Activated CD8-positive, alpha-beta T cell treated with anti-CD3 and anti-CD28 coated beads for 36 hours (primary cell): ENCODE measurements at regions of chr1 and their contacts with region 1.

Region 1: GRCh38 chr1:27632387-27633297 is 2.3 kb downstream of the FGR start:
- DNase-seq: peak; percentile 91
- ATAC-seq: peak; percentile 73
- H3K4me3 Mint-ChIP-seq: peak overlapping the region; percentile 57
- H3K27ac Mint-ChIP-seq: peak overlapping the region; percentile 84
- H3K4me1 Mint-ChIP-seq: peaks cover 71% of the 10 kb centered on the region
- H3K27me3 Mint-ChIP-seq: no peaks in the 10 kb centered on the region
- CTCF ChIP-seq: no peak

Region 2: GRCh38 chr1:27618341-27619082 is 14.1 kb before region 1 on chr1:
- CTCF ChIA-PET with region 1: interaction called, 4 read pairs
- POLR2A ChIA-PET with region 1: interaction called, 10 read pairs
- intact Hi-C with region 1: no loop called
- DNase-seq: peak; percentile 75
- ATAC-seq: peak; percentile 86
- H3K4me3 Mint-ChIP-seq: no peak overlapping the region
- H3K27ac Mint-ChIP-seq: peak overlapping the region; percentile 85
- H3K4me1 Mint-ChIP-seq: peaks cover 44% of the 10 kb centered on the region
- H3K27me3 Mint-ChIP-seq: no peaks in the 10 kb centered on the region
- CTCF ChIP-seq: no peak

Region 3: GRCh38 chr1:27760426-27760825 is 127.8 kb after region 1 on chr1:
- CTCF ChIA-PET with region 1: no interaction called
- POLR2A ChIA-PET with region 1: no interaction called
- intact Hi-C with region 1: no loop called
- DNase-seq: no peak
- ATAC-seq: no peak
- H3K4me3 Mint-ChIP-seq: no peak overlapping the region
- H3K27ac Mint-ChIP-seq: no peak overlapping the region
- H3K4me1 Mint-ChIP-seq: no peaks in the 10 kb centered on the region
- H3K27me3 Mint-ChIP-seq: no peaks in the 10 kb centered on the region
- CTCF ChIP-seq: no peak